Activated B cell treated with CpG ODN at 0.5 μM for 24 hours (primary cell): ENCODE measurements at regions of chr22 and their contacts with region 1.

Region 1: GRCh38 chr22:42614312-42615091 is at the start of gene POLDIP3:
- DNase-seq: peak; percentile 97
- ATAC-seq: peak; percentile 60
- H3K4me3 Mint-ChIP-seq: peak within 1 kb of the TSS; percentile 97
- H3K27ac Mint-ChIP-seq: peak within 1 kb of the TSS; percentile 100
- H3K4me1 Mint-ChIP-seq: peaks cover 56% of the 10 kb centered on the region
- H3K27me3 Mint-ChIP-seq: no peaks in the 10 kb centered on the region
- CTCF ChIP-seq: no peak
- total RNA-seq, gene POLDIP3: 77.1 and 77.5 TPM in 2 replicates

Region 2: DNA sequence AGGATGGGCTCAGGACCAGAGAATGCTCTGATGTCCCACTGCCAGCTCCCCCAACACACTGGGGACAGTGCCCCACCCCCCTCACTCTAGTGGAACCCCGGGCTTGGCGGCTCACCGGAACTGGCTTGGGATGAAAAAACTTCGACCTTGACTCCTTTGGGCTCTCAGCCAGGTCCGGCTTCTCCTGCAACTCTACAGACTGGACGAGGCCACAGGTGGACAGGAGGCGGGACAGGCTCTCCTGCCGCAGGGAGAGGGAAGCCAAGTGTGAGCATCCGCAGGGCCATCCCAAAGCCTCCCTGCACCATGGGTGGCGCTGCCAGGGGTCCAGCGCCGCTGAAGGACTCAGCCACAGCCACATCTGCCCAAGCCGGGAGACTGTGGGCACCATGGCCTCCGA is 98.6 kb before region 1 on chr22:
- CTCF ChIA-PET with region 1: no interaction called
- POLR2A ChIA-PET with region 1: interaction called, 6 read pairs
- intact Hi-C with region 1: loop called (anchors 5 kb)
- DNase-seq: no peak
- ATAC-seq: no peak
- H3K4me3 Mint-ChIP-seq: no peak overlapping the region
- H3K27ac Mint-ChIP-seq: no peak overlapping the region
- H3K4me1 Mint-ChIP-seq: peaks cover 17% of the 10 kb centered on the region
- H3K27me3 Mint-ChIP-seq: no peaks in the 10 kb centered on the region
- CTCF ChIP-seq: no peak

Region 3: GRCh38 chr22:42553475-42554361 is 60.8 kb before region 1 on chr22 and contains the start of gene SERHL2:
- CTCF ChIA-PET with region 1: interaction called, 3 read pairs
- POLR2A ChIA-PET with region 1: interaction called, 10 read pairs
- intact Hi-C with region 1: loop called (anchors 2 kb)
- DNase-seq: peak; percentile 97
- ATAC-seq: peak; percentile 95
- H3K4me3 Mint-ChIP-seq: peak within 1 kb of the TSS; percentile 86
- H3K27ac Mint-ChIP-seq: peak within 1 kb of the TSS; percentile 80
- H3K4me1 Mint-ChIP-seq: peaks cover 52% of the 10 kb centered on the region
- H3K27me3 Mint-ChIP-seq: no peaks in the 10 kb centered on the region
- CTCF ChIP-seq: no peak
- total RNA-seq, gene SERHL2: 0.91 and 1.7 TPM in 2 replicates

Region 4: GRCh38 chr22:42649246-42650099 is 35.0 kb after region 1 on chr22 and contains the start of gene CYB5R3:
- CTCF ChIA-PET with region 1: no interaction called
- POLR2A ChIA-PET with region 1: interaction called, 96 read pairs
- intact Hi-C with region 1: loop called (anchors 1 kb)
- DNase-seq: peak; percentile 81
- ATAC-seq: peak; percentile 77
- H3K4me3 Mint-ChIP-seq: peak within 1 kb of the TSS; percentile 92
- H3K27ac Mint-ChIP-seq: peak within 1 kb of the TSS; percentile 91
- H3K4me1 Mint-ChIP-seq: peaks cover 55% of the 10 kb centered on the region
- H3K27me3 Mint-ChIP-seq: no peaks in the 10 kb centered on the region
- CTCF ChIP-seq: no peak
- total RNA-seq, gene CYB5R3: 78.2 and 91.7 TPM in 2 replicates

Region 5: DNA sequence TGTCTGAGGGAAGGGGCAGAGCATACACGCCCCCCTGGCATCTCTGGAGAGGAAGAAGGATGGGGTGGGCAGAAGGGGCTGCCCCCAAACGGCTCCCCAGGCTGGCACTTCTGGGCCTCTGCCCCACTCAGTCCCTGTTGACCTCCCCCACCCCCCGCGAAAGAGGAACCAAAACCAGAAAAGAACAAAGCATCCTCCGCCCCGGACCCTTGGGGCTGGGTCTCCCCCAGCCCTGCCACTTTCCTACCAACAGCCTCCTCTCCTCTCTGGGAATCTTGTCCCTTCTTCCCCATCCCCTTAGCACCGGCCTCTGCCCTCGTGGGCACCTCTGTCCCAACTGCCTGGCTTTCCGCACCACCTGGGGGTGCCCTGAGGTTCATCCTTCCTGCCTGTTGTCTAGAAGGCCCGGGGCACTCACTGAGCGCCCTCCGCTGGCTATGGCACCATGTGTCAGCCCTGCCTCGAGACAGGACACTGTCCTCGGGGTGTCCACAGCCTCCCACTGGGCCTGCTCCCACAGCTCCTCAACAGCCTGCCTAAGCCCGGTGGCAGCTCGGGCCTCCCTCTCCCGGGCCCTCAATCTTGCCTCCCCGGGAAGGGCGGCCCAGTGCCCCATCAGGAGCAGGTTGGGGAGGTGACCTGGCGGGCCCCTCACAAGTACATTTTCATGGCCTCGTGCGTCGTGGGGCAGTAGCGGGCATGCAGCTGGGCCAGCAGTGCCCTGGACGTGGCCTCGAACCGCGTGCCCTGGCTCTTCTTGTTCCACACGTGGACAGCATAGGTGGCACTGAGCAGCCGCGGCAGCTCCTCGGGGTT is 77.9 kb after region 1 on chr22:
- CTCF ChIA-PET with region 1: no interaction called
- POLR2A ChIA-PET with region 1: interaction called, 4 read pairs
- intact Hi-C with region 1: loop called (anchors 2 kb)
- DNase-seq: peak; percentile 45
- ATAC-seq: peak; percentile 87
- H3K4me3 Mint-ChIP-seq: peak overlapping the region; percentile 68
- H3K27ac Mint-ChIP-seq: peak overlapping the region; percentile 88
- H3K4me1 Mint-ChIP-seq: peaks cover 42% of the 10 kb centered on the region
- H3K27me3 Mint-ChIP-seq: no peaks in the 10 kb centered on the region
- CTCF ChIP-seq: no peak

Region 6: GRCh38 chr22:42820066-42820763 is 205.7 kb after region 1 on chr22:
- CTCF ChIA-PET with region 1: interaction called, 6 read pairs
- POLR2A ChIA-PET with region 1: interaction called, 15 read pairs
- intact Hi-C with region 1: no loop called
- DNase-seq: no peak
- ATAC-seq: no peak
- H3K4me3 Mint-ChIP-seq: no peak overlapping the region
- H3K27ac Mint-ChIP-seq: no peak overlapping the region
- H3K4me1 Mint-ChIP-seq: peaks cover 3% of the 10 kb centered on the region
- H3K27me3 Mint-ChIP-seq: no peaks in the 10 kb centered on the region
- CTCF ChIP-seq: no peak

Region 7: GRCh38 chr22:42933481-42934091 is 319.1 kb after region 1 on chr22:
- CTCF ChIA-PET with region 1: interaction called, 3 read pairs
- POLR2A ChIA-PET with region 1: interaction called, 10 read pairs
- intact Hi-C with region 1: no loop called
- DNase-seq: peak; percentile 59
- ATAC-seq: peak; percentile 73
- H3K4me3 Mint-ChIP-seq: peak overlapping the region; percentile 82
- H3K27ac Mint-ChIP-seq: peak overlapping the region; percentile 98
- H3K4me1 Mint-ChIP-seq: peaks cover 99% of the 10 kb centered on the region
- H3K27me3 Mint-ChIP-seq: no peaks in the 10 kb centered on the region
- CTCF ChIP-seq: no peak